T-cell (primary cell): ENCODE measurements at regions of chr5 and their contacts with region 1.

Region 1: DNA sequence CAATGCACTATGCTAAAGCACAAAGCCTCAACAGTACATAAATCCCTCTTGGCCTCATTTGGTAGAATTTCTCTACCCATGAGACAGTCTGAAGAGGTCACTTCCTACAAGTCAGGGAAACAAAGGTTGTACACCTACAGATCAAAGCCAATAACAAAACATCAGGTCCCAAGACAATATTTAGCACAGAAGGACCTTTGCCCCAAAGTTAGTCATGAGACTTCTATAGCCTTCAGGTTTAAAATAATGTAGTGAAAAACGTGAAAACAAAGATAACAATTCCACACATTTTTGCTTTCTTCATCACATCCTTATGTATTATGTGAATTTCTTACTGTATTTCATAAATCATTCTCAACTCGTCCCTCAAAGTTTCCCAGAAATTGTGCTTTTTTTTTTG is 15.8 kb downstream of the AFF4 start:
- DNase-seq: no peak
- ATAC-seq: no peak
- H3K4me3 ChIP-seq: no peak overlapping the region
- H3K4me3 Mint-ChIP-seq: no peak overlapping the region
- H3K27ac ChIP-seq: no peak overlapping the region
- H3K27ac Mint-ChIP-seq: no peak overlapping the region
- H3K4me1 ChIP-seq: peaks cover 0 to 23% of the 10 kb centered on the region in 2 experiments
- H3K4me1 Mint-ChIP-seq: peaks cover 55 to 69% (median 68%) of the 10 kb centered on the region in 3 donors
- H3K27me3 ChIP-seq: no peaks in the 10 kb centered on the region
- H3K27me3 Mint-ChIP-seq: no peaks in the 10 kb centered on the region

Region 2: GRCh38 chr5:132979367-132979940 is 31.8 kb after region 1 on chr5:
- CTCF ChIA-PET with region 1: no interaction called
- POLR2A ChIA-PET with region 1: interaction called in 1 of 2 experiments, 10 read pairs
- DNase-seq: no peak
- ATAC-seq: no peak
- H3K4me3 ChIP-seq: no peak overlapping the region
- H3K4me3 Mint-ChIP-seq: no peak overlapping the region
- H3K27ac ChIP-seq: no peak overlapping the region
- H3K27ac Mint-ChIP-seq: no peak overlapping the region
- H3K4me1 ChIP-seq: no peaks in the 10 kb centered on the region
- H3K4me1 Mint-ChIP-seq: no peaks in the 10 kb centered on the region
- H3K27me3 ChIP-seq: peaks cover 0 to 2% of the 10 kb centered on the region in 2 experiments
- H3K27me3 Mint-ChIP-seq: no peaks in the 10 kb centered on the region